Activated CD4-positive, alpha-beta memory T cell treated with anti-CD3 and anti-CD28 coated beads for 36 hours (primary cell): ENCODE measurements at regions of chr10 and their contacts with region 1.

Region 1: DNA sequence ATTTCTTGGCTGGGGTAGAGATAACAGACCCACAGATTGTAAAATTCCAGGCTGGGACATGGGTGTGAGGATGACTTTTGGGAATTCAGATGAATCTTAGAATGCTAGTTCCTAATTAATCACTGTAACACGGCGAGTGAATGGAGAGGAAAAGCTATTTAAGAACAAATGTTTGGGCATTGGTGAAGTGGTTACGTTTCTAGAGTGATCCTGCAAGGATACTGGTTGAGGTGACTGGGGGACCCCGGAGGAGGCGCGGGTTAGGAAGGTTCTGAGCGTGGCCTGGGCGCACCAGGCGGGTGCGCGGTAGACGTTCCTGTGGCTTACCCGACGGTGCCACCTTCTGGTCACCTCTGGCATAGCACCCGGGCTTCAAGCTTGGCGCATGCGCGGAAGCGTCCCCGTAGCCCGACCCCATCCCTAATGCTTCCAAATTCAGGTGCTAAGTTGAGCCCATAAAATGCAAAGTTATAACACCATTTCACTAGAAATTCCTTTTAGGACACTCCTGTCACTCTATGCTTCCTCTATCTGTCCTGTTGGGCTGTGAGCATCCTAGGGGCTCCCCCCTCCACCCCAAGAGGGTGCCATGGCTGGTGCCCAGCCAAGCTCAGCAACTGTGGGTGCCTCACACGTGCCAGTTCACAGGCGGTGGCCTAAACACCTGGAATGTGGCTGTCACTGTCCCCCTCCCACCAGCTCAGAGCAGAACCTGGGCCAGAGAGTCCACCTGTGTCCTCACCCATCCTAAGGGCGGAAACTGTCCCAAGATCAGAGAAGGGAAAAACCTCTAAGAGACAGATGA is 104.5 kb downstream of the PTPRE start:
- DNase-seq: peak; percentile 91
- H3K4me3 Mint-ChIP-seq: no peak overlapping the region
- H3K27ac Mint-ChIP-seq: peak overlapping the region; percentile 18
- H3K4me1 Mint-ChIP-seq: peaks cover 12% of the 10 kb centered on the region
- H3K27me3 Mint-ChIP-seq: peaks cover 14% of the 10 kb centered on the region

Region 2: GRCh38 chr10:127715782-127716378 is 295.5 kb before region 1 on chr10:
- CTCF ChIA-PET with region 1: interaction called, 8 read pairs
- POLR2A ChIA-PET with region 1: no interaction called
- intact Hi-C with region 1: loop called (anchors 2 kb)
- DNase-seq: no peak
- H3K4me3 Mint-ChIP-seq: no peak overlapping the region
- H3K27ac Mint-ChIP-seq: no peak overlapping the region
- H3K4me1 Mint-ChIP-seq: no peaks in the 10 kb centered on the region
- H3K27me3 Mint-ChIP-seq: peaks cover 2% of the 10 kb centered on the region

Region 3: DNA sequence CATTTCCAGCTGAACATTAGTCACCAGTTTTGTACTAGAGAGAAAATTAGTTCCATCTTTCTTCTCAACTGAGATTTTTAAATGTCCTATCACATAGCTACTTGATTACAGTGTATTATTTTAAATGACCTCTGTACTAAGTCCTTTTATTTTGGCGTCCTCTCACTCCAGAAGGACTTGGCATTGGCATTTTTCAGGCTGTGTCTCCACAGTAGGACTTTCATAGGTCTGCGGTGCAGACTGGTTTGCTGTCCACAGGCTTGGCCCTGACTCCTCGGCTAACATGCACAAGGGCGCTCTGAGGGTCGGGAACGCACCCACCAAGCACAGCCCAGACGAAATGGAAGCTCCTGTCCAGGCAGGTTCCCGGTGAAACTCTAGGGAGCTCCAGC is 98.0 kb before region 1 on chr10:
- CTCF ChIA-PET with region 1: interaction called, 270 read pairs
- POLR2A ChIA-PET with region 1: no interaction called
- intact Hi-C with region 1: no loop called
- DNase-seq: no peak
- H3K4me3 Mint-ChIP-seq: no peak overlapping the region
- H3K27ac Mint-ChIP-seq: no peak overlapping the region
- H3K4me1 Mint-ChIP-seq: no peaks in the 10 kb centered on the region
- H3K27me3 Mint-ChIP-seq: peaks cover 8% of the 10 kb centered on the region

Region 4: DNA sequence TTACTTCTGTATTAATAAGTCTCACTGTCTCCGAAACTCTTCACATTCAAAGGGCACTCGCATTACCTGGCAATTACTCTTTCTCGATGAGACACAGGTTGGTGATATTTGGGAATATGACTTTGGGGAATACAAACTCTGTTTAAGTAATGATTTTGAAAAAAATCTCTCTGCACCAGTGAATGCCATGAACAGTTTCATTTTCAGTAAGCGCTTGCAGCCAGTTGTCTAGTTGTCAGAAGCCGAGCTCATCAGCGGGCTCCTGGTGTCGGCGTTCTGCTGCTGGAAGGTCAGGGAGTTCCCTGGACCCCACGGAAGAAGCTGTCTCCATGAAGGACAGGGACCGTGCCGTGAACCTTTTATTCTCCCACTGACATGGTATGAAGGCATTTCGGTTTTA is 46.8 kb before region 1 on chr10:
- CTCF ChIA-PET with region 1: no interaction called
- POLR2A ChIA-PET with region 1: no interaction called
- intact Hi-C with region 1: no loop called
- DNase-seq: no peak
- H3K4me3 Mint-ChIP-seq: no peak overlapping the region
- H3K27ac Mint-ChIP-seq: no peak overlapping the region
- H3K4me1 Mint-ChIP-seq: no peaks in the 10 kb centered on the region
- H3K27me3 Mint-ChIP-seq: peaks cover 5% of the 10 kb centered on the region

Region 5: DNA sequence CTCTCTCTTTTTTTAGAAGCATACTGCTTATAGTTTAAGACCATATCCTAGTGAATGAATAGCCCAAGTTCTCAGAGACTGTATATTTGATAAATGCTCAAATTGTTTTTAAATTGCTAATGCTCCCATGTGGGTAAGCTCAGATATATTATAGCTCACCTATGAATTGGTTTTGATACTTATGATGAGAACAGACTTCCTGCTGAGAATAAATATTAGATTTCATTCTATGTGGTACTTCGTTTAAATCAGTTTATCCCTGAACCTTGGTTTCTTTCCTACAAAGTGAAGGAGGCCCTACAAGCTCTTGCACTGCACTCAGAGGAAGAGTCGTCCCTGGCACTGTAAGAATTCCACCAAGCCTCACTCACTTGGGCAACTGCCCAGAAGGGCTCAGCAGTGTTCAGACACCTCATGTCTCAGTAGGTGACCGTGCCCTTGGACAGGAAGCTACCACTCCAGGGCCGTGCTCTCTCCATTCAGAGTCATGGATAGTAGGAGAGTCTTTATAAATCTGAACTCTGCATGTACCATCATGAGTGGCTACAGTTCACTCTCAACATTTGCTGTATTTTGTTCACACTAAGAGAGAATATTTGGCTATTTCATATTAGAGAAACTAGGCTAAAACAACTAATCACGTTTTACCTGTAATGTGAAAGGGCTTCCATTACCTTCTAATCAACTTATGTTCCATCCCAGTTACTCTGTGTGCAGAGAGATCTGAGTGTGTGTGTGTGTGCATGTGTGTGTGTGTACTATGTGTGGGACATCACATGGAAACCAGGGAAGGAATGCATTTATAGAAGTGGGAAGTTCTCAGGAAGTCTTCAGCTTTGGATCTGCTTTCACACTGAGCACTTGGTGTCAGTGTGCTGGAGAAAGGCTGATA is 10.7 kb before region 1 on chr10:
- CTCF ChIA-PET with region 1: interaction called, 11 read pairs
- POLR2A ChIA-PET with region 1: no interaction called
- intact Hi-C with region 1: no loop called
- DNase-seq: no peak
- H3K4me3 Mint-ChIP-seq: no peak overlapping the region
- H3K27ac Mint-ChIP-seq: no peak overlapping the region
- H3K4me1 Mint-ChIP-seq: no peaks in the 10 kb centered on the region
- H3K27me3 Mint-ChIP-seq: peaks cover 24% of the 10 kb centered on the region

Region 6: GRCh38 chr10:128035557-128035973 is 24.2 kb after region 1 on chr10:
- CTCF ChIA-PET with region 1: interaction called, 12 read pairs
- POLR2A ChIA-PET with region 1: no interaction called
- intact Hi-C with region 1: no loop called
- DNase-seq: peak; percentile 78
- H3K4me3 Mint-ChIP-seq: no peak overlapping the region
- H3K27ac Mint-ChIP-seq: no peak overlapping the region
- H3K4me1 Mint-ChIP-seq: peaks cover 9% of the 10 kb centered on the region
- H3K27me3 Mint-ChIP-seq: no peaks in the 10 kb centered on the region

Region 7: GRCh38 chr10:128064108-128064969 is 53.0 kb after region 1 on chr10:
- CTCF ChIA-PET with region 1: interaction called, 66 read pairs
- POLR2A ChIA-PET with region 1: no interaction called
- intact Hi-C with region 1: loop called (anchors 1 kb)
- DNase-seq: peak; percentile 91
- H3K4me3 Mint-ChIP-seq: peak overlapping the region; percentile 59
- H3K27ac Mint-ChIP-seq: peak overlapping the region; percentile 96
- H3K4me1 Mint-ChIP-seq: peaks cover 58% of the 10 kb centered on the region
- H3K27me3 Mint-ChIP-seq: no peaks in the 10 kb centered on the region

Region 8: DNA sequence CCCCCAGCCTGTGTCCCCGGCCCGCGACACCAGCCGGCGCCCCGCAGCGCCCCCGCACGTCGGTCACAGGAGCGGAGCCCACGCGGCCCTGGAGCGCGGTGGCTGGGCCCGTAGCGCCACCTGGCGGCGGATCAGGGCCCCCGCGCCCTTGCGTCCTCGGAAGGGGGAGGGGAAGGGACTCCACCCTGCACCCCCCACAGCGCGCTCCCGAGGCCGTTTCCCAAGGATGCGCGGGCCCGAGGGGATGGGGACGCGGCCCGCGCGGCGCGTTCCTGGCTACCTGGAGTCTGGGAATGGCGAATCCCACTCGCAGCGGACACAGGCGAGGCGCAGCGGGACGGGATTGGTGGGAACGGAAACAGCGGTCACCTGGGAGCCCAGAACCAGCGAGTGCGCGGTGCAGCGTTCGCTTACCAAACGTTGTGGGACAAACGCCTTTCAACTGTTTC is 138.7 kb after region 1 on chr10:
- CTCF ChIA-PET with region 1: interaction called, 12 read pairs
- POLR2A ChIA-PET with region 1: no interaction called
- intact Hi-C with region 1: no loop called
- DNase-seq: peak; percentile 82
- H3K4me3 Mint-ChIP-seq: peak overlapping the region; percentile 72
- H3K27ac Mint-ChIP-seq: no peak overlapping the region
- H3K4me1 Mint-ChIP-seq: peaks cover 20% of the 10 kb centered on the region
- H3K27me3 Mint-ChIP-seq: no peaks in the 10 kb centered on the region